PC-3 (cell line): ENCODE measurements at regions of chr10 and their contacts with region 1.

Region 1: GRCh38 chr10:35289198-35289597 is 47.1 kb upstream of the CCNY start:
- DNase-seq: no peak
- ATAC-seq: no peak
- H3K4me3 ChIP-seq: no peak overlapping the region
- H3K27ac ChIP-seq: no peak overlapping the region
- H3K4me1 ChIP-seq: no peaks in the 10 kb centered on the region
- H3K27me3 ChIP-seq: no peaks in the 10 kb centered on the region
- CTCF ChIP-seq: no peak

Region 2: DNA sequence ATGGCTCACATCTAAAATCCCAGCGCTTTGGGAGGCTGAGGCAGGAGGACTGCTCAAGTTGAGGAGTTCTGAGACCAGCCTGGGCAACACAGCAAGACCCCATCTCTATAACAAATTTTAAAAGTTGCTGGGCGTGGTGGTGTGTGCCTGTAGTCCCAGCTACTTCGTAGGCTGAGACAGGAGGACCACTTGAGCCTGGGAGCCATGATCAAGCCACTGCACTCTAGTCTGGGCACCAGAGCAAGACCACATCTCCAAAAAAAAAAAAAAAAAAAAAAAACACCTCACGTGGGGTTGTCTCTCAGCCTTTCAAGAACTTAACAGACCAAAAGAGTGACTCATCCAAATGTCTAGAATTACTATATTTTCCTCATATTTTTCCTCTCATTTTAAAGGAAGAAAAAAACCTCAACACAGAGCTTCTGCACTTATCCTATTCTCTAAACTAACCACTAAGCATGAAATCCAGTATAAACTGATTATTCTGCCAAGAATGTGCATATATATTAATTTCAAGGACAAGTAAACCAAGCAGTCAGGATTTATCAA is 245.3 kb before region 1 on chr10:
- CTCF ChIA-PET with region 1: no interaction called
- POLR2A ChIA-PET with region 1: no interaction called
- intact Hi-C with region 1: no loop called
- DNase-seq: no peak
- ATAC-seq: no peak
- H3K4me3 ChIP-seq: no peak overlapping the region
- H3K27ac ChIP-seq: peak overlapping the region; percentile 49
- H3K4me1 ChIP-seq: peaks cover 46% of the 10 kb centered on the region
- H3K27me3 ChIP-seq: no peaks in the 10 kb centered on the region
- CTCF ChIP-seq: no peak

Region 3: DNA sequence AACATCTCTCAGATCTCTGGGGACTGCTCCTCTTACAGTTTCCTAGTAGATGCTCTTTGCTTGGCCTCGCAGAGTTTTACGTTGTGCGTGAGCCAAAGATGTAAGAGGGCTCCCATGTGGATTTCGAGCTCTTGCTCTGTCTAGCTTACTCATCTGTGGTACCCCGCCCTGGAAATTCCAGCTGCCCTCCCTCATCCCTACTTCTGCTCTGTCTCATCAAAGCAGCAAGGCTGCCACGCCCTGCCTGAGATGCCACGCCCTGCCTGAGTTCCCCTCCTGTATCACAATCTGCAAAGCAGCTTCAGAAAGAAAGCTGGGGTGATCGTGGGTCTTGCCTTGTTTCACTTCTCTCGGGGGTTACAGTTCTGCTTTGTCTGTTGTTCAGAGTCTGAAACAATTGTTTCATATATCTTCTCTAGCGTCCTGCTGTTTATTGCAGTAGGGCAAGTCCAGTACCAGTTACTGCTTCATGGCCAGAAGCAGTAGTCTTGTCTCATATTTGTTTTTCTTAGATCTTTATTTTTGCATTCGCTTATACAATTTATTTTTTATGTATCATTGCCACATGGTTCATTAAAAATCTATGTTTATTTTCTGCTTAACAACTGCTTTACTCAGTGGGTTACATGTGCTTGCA is 11.0 kb after region 1 on chr10:
- CTCF ChIA-PET with region 1: interaction called, 12 read pairs
- POLR2A ChIA-PET with region 1: no interaction called
- intact Hi-C with region 1: no loop called
- DNase-seq: peak; percentile 99
- ATAC-seq: peak; percentile 100
- H3K4me3 ChIP-seq: peak overlapping the region; percentile 29
- H3K27ac ChIP-seq: peak overlapping the region; percentile 6
- H3K4me1 ChIP-seq: peaks cover 13% of the 10 kb centered on the region
- H3K27me3 ChIP-seq: no peaks in the 10 kb centered on the region
- CTCF ChIP-seq: no peak

Region 4: DNA sequence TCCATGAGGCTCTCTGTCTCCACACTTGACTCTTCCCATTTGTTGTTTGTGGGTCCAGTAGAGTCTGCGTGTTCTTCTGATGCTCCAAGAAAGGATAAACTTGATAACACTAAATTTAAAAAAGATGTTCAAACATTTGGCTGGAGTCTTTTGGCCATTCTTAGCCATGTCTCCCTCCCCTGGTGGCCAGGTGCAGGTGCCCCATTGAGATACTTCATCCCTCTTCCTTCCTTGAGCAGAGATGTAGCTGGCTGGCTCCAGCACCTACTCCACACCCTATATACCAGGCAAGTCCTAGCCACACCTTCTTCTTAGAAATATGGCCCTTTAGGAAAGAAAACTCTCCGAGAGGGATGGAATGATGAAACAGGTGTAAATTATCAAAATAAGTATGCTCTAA is 212.7 kb after region 1 on chr10:
- CTCF ChIA-PET with region 1: no interaction called
- POLR2A ChIA-PET with region 1: no interaction called
- intact Hi-C with region 1: no loop called
- DNase-seq: peak; percentile 57
- ATAC-seq: peak; percentile 76
- H3K4me3 ChIP-seq: no peak overlapping the region
- H3K27ac ChIP-seq: no peak overlapping the region
- H3K4me1 ChIP-seq: no peaks in the 10 kb centered on the region
- H3K27me3 ChIP-seq: no peaks in the 10 kb centered on the region
- CTCF ChIP-seq: peak; percentile 93